Esophagus muscularis mucosa (tissue), 4 donors: ENCODE measurements at regions of chr18 and their contacts with region 1.

Region 1: GRCh38 chr18:25896178-25896780 is 194.1 kb downstream of the SS18 start:
- DNase-seq: no peak
- H3K4me3 ChIP-seq: no peak overlapping the region
- H3K27ac ChIP-seq: no peak overlapping the region
- H3K4me1 ChIP-seq: no peaks in the 10 kb centered on the region
- H3K27me3 ChIP-seq: no peaks in the 10 kb centered on the region
- CTCF ChIP-seq: peak; percentile 37 to 62 (median 46)
- EP300 ChIP-seq: no peak
- POLR2A ChIP-seq: no peak

Region 2: DNA sequence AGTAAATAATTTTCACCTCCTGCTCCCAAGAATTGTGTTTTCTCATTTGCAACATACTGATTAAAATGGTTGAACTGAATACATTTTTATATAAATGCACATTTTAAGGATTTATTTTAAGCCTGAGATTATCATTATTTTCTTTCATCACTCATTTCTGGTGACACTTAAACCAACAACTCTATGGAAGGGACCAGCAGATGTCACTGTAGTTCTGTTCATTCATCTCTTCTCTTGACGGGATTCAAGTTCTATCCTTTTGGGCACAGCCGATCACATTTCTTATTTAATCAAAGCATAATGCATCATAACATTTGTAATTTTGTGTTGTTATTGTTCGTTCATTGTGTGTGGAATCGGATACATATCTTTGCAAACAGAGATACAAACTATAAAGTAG is 1018.0 kb before region 1 on chr18:
- intact Hi-C with region 1: loop called (anchors 5 kb)
- DNase-seq: no peak
- H3K4me3 ChIP-seq: no peak overlapping the region
- H3K27ac ChIP-seq: no peak overlapping the region
- H3K4me1 ChIP-seq: no peaks in the 10 kb centered on the region
- H3K27me3 ChIP-seq: peaks cover 0 to 15% (median 0%) of the 10 kb centered on the region in 4 donors
- CTCF ChIP-seq: peak; percentile 26 to 36 (median 28)
- EP300 ChIP-seq: no peak
- POLR2A ChIP-seq: no peak

Region 3: GRCh38 chr18:25678221-25678620 is 218.1 kb before region 1 on chr18:
- intact Hi-C with region 1: no loop called
- DNase-seq: no peak
- H3K4me3 ChIP-seq: no peak overlapping the region
- H3K27ac ChIP-seq: no peak overlapping the region
- H3K4me1 ChIP-seq: no peaks in the 10 kb centered on the region
- H3K27me3 ChIP-seq: no peaks in the 10 kb centered on the region
- CTCF ChIP-seq: no peak
- EP300 ChIP-seq: no peak
- POLR2A ChIP-seq: no peak